Posterior cingulate gyrus (tissue), 11 donors: ENCODE measurements at regions of chr4 and their contacts with region 1.

Region 1: DNA sequence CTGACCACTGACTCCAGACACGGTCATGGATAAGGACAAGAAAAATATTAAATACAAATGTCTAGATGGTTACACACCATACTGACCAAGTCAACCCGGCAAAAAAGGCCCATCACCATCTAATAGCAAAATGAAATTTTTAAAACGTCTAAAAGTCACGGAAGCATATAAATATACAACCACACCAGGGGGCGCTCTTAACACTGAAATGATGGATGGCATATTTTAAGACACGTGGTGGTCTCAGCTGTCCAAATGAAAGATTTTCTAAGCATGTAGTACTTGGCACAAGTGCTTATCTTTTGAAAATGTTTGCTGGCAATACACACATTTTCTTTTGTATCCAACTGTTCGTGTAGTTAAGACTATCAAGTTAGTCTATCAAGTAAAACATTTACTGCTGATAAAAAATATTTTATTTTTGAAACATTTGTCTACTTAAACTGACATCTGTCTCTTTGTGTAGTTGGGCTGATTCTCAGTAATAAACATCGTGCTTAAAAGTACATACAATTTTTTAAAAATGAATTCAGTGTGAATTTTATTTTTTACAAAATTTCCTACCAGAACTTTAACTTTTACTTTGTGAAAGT is 64.6 kb downstream of the COX7B2 start:
- DNase-seq: peak in 6 of 10 donors; percentile 5 to 54 (median 27)

Region 2: DNA sequence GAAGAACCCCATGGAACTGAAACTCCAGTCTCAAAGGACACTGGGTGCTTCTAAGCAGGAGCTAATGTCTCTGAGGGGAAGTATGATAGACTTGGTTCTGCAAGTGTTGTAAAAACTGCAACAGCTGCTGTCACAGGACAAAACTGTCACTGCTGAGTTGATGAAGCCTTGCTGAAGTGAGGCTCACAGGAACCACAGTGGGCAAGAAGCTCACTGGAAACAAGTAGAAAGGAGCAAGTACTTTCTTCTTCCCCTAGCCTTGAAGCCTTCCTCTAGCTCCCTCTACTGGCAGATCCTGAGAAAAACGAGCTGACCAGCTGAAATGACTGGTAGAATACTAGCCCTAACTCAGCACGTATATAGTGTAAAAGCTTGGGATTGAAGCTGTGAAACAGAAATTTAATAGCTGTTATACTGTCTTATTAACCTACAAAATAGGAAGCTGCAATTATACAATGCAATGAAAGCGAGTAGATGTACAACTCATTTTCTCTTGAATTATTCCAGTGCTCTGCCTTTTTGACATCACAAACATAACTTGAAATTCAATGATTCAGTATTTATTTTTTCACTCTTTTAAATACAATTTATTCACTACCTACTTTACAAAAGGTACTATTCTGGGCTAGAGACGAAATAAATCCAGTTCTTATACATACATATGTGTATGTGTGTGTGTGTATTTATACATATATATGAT is 278.3 kb after region 1 on chr4:
- intact Hi-C with region 1: loop called (anchors 5 kb)
- DNase-seq: peak in 8 of 10 donors; percentile 14 to 84 (median 52)

Region 3: DNA sequence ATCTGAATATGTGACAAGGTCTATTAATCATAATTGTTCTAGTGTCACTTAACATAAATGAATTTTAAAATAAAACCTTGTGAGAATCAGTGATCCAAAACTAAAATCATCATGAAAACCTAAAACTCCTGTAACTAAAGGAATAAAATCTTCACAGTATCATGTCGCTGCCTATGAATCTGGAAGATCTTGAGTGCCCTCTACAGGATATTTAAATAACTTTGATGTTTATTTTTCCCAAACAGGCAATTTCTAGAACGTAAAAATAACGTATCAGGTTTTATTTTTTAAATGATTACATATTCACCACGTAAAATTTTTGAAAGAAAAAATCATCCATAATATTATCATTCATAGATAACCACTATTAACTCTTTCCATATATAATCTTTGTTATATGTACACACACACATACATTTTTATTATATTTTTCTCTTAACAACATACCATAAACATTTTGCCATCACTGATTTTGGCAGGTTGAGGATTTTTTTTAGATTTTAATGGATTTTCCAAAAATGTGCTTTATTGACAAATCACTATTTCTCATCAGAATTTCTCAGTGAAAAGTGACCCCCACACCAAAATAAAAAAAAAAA is 539.5 kb after region 1 on chr4:
- intact Hi-C with region 1: loop called (anchors 5 kb)
- DNase-seq: no peak